OCI-LY7 (cell line): ENCODE measurements at regions of chr15 and their contacts with region 1.

Region 1: GRCh38 chr15:45714590-45715488 is 80.0 kb downstream of the SQOR start:
- DNase-seq: peak; percentile 74
- H3K4me3 ChIP-seq: no peak overlapping the region
- H3K27ac ChIP-seq: no peak overlapping the region
- H3K4me1 ChIP-seq: peaks cover 30% of the 10 kb centered on the region
- CTCF ChIP-seq: peak; percentile 99

Region 2: GRCh38 chr15:45732662-45733061 is 17.8 kb after region 1 on chr15:
- CTCF ChIA-PET with region 1: interaction called, 6 read pairs
- POLR2A ChIA-PET with region 1: interaction called, 42 read pairs
- intact Hi-C with region 1: loop called (anchors 2 kb)
- DNase-seq: no peak
- H3K4me3 ChIP-seq: no peak overlapping the region
- H3K27ac ChIP-seq: peak overlapping the region; percentile 99
- H3K4me1 ChIP-seq: peaks cover 75% of the 10 kb centered on the region
- CTCF ChIP-seq: no peak

Region 3: DNA sequence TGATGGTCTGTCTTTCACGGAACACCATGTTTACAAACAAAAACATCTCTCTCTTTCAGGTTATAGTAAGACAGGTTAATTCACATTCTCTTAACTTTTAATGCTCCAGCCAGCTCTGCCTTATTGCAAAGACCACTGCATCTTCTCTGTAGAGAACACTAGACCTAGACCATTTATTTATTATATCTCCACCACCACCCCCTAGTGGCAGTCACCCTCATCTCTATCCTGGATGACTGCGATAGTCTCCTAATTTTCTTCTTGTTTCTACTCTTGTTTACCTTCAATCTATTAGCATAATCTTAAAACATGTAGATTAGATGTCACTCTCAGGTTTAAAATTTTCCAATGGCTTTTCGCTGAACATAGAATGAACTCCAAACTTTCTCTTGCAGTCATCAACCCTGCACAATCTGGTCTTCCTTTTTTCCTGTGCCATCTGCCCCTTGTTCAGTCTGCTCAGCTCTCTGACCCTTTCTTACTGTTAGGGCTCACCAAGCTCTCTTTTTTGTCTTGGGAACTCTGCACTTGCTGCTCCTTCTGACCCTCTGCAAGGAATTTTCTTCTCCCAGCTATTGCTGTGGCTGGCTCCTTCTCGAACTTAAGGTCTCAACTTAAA is 75.6 kb after region 1 on chr15:
- CTCF ChIA-PET with region 1: interaction called, 47 read pairs
- POLR2A ChIA-PET with region 1: interaction called, 57 read pairs
- intact Hi-C with region 1: loop called (anchors 1 kb)
- DNase-seq: peak; percentile 74
- H3K4me3 ChIP-seq: no peak overlapping the region
- H3K27ac ChIP-seq: no peak overlapping the region
- H3K4me1 ChIP-seq: peaks cover 8% of the 10 kb centered on the region
- CTCF ChIP-seq: peak; percentile 93

Region 4: GRCh38 chr15:46080016-46080415 is 365.2 kb after region 1 on chr15:
- CTCF ChIA-PET with region 1: no interaction called
- POLR2A ChIA-PET with region 1: no interaction called
- intact Hi-C with region 1: loop called (anchors 10 kb)
- DNase-seq: no peak
- H3K4me3 ChIP-seq: no peak overlapping the region
- H3K27ac ChIP-seq: no peak overlapping the region
- H3K4me1 ChIP-seq: no peaks in the 10 kb centered on the region
- CTCF ChIP-seq: no peak

Region 5: DNA sequence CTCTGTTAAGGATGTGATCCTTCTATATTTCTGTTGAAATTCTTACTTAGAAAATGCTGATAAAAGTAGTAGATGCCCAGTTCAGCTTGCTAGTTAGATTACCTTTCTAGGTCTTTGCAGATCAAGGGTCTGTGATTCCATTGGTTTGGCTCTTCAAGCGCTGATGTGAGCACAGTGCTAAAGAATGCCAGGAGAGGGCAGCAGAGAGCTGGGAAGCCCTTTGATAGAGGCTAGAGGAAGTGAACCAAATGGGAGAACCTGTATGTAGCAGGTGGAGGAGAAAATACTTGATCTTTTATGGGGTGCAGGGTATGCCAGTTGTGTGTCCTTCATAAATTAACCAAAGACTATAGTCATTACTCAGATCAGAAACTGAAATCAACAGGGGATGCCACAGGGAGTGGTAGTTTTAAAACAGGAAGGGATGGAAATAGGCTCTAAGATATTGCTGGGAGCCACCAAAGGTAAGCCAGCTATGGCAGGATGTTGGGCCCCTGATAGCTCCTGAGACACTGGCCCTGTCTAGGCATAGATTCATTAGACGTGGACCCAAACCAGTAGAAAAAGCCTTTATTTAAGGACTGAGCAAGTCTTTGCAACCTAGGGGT is 597.4 kb after region 1 on chr15:
- CTCF ChIA-PET with region 1: no interaction called
- POLR2A ChIA-PET with region 1: no interaction called
- intact Hi-C with region 1: loop called (anchors 5 kb)
- DNase-seq: peak; percentile 69
- H3K4me3 ChIP-seq: no peak overlapping the region
- H3K27ac ChIP-seq: no peak overlapping the region
- H3K4me1 ChIP-seq: no peaks in the 10 kb centered on the region
- CTCF ChIP-seq: peak; percentile 90